A673 (cell line): ENCODE measurements at regions of chr16 and their contacts with region 1.

Region 1: DNA sequence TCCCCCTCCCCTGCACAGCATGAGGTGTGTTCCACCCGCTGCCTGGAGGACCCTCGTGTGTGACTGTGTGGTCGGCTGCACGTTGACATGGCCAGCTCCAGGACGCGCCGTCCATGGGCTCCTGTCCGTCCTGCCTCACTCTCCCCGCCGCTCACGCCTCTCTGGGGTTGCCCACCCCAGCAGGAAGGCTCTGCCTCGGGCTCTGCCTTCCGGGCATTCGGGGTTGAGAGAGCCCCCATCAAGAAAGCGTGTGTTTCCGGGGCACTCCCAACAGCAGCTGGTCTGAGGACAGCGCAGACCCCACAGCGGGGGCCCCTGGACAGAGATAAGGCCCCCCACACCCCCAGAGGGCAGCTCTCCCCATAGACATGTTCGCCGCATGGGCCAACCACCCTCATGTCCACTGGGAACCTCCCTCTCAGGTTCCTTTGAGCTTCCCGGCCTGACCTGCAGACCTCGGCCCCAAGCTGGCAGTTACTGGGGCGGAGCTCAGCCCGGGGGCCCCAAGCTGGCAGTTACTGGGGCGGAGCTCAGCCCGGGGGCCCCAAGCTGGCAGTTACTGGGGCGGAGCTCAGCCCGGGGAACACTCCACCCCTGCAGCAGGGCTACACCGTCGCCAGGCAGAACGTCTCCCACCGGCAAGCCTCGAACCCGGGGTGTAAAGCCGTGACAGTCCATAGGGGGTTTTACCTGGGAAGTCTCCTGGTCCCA is 8.4 kb upstream of the PIEZO1 start:
- DNase-seq: no peak
- H3K4me3 ChIP-seq: no peak overlapping the region
- H3K27ac ChIP-seq: no peak overlapping the region
- H3K4me1 ChIP-seq: peaks cover 11% of the 10 kb centered on the region
- H3K27me3 ChIP-seq: no peaks in the 10 kb centered on the region
- CTCF ChIP-seq: no peak

Region 2: DNA sequence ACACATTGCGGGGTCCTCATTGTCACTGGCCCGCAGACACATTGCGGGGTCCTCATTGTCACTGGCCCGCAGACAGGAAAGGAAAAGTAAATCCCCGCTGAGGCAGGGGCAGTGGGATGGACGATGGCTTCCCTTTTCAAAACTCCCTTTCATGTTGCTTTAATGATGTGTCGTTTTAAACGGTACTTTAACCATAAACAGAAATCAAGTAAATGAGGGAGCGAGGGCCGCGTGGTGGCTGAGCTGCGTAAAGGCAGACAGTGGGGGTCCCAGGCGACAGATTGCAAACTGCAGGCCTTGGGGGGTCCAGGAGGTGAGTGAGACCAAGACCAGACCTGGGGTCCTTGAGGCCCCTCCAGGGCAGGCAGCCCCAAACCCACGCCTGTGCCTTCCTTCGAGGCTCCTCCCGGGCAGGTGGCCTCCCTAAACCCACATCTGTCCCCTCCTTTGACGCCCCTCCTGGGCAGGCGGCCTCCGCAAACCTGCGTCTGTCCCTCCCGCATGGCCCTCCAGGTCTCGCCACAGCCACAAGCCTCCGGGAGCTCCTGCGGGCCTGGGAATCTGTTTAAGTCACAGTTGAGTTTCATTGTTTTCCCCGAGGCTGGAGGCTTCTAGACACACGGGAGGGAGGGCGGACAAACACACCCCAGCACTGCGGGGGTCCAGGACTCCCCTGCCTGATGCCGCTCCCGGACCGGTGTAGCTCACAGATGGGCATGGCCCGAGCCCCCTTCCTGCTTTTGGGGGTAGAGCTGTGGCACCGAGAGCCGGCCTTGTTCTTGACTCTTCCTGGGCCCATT is 15.7 kb before region 1 on chr16:
- CTCF ChIA-PET with region 1: no interaction called
- POLR2A ChIA-PET with region 1: no interaction called
- intact Hi-C with region 1: no loop called
- DNase-seq: no peak
- H3K4me3 ChIP-seq: no peak overlapping the region
- H3K27ac ChIP-seq: peak overlapping the region; percentile 64
- H3K4me1 ChIP-seq: peaks cover 73% of the 10 kb centered on the region
- H3K27me3 ChIP-seq: no peaks in the 10 kb centered on the region
- CTCF ChIP-seq: no peak

Region 3: GRCh38 chr16:88803264-88803987 is 10.0 kb after region 1 on chr16 and contains the start of gene CDT1:
- CTCF ChIA-PET with region 1: no interaction called
- POLR2A ChIA-PET with region 1: interaction called, 13 read pairs
- intact Hi-C with region 1: no loop called
- DNase-seq: peak; percentile 89
- H3K4me3 ChIP-seq: peak within 1 kb of the TSS; percentile 88
- H3K27ac ChIP-seq: peak within 1 kb of the TSS; percentile 92
- H3K4me1 ChIP-seq: peaks cover 15% of the 10 kb centered on the region
- H3K27me3 ChIP-seq: no peaks in the 10 kb centered on the region
- CTCF ChIP-seq: no peak
- total RNA-seq, gene CDT1: 103 TPM in 2 replicates

Region 4: DNA sequence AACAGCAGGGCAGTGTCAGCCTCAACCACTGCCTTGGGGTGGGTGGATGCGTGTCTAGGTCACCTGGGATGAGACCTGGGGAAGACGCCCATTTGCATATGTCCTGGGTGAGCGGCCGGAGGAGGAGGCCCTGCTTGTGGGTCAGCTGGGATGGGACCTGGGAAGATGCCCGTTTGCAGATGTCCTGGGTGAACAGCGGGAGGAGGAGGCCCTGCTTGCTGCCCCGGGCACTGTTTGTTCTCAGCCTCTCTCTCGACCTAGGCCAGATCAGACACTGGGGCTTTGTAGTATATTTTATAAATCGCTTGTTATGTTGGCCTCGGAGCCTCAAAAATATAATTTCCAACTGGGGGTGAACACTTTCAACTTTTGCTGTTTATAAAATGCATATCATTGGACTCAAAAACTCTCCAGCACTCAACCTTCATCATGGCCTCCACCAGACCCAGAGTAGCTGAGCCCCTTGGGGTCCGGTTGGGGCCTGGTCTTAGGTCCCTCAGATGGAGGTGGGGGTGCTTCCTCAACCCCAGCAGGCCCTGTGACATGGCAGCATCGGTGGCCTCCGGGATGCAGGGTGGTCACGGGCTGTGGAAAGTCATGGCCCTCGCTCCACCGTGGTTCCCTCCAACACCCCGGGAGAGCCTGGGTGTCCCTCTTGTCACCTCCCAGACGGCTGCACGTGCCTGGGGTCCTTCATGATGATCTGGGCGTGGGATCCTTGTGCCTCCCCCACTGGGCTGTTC is 1208.5 kb after region 1 on chr16:
- CTCF ChIA-PET with region 1: interaction called, 30 read pairs
- POLR2A ChIA-PET with region 1: no interaction called
- intact Hi-C with region 1: no loop called
- DNase-seq: no peak
- H3K4me3 ChIP-seq: no peak overlapping the region
- H3K27ac ChIP-seq: no peak overlapping the region
- H3K4me1 ChIP-seq: no peaks in the 10 kb centered on the region
- H3K27me3 ChIP-seq: no peaks in the 10 kb centered on the region
- CTCF ChIP-seq: no peak